ENCODE measurements at regions of chr17 and their contacts with region 1.

Region 1: DNA sequence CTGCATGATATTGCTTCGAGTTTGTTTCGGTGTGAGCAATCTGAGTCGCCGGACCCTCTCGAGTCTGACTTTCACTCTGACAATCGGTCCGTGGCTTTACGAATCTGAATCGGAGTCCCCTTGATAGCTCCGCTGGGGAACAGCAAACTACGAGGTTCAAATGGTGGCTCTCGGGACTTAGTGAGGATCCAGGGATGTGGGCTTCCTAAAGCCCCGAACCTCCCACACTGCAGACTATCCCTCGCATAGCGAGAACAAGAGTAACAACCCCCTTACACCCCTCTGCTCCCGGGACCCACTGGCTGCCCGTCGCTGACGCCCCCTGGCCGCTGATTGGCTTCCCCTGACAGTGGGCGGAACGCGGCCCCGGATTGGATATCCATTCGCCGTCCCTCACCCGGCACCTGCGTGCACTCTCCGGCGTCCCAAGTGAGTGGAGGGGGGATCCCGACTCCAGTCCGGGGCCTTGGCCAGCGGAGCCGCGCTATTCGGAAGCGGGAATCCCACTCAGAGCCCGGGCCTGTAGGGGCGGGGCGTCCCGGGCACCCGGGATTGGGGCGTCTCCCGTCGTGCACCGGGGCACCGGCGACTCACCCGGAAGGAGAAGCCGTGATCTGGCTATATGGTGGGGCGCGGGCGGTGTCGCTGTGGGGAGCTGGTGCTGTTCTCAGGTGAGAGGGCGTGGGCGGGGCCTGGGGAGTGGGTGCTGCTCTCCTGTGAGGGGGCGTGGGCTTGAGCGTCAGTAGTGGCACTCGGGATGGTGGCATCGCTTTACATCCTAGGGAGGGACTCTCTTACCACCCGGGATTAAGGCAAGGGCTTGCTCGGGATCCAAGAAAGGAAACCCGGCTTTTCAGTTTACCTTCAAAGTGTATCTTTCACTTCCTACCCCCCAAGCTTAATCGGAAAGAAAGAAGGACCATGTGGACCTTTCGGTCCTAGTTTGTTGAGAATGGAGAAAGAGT is at the start of gene SNX11:
- DNase-seq: peak; percentile 86 to 97 (median 94)
- ATAC-seq: peak; percentile 93
- H3K4me3 ChIP-seq: peak within 1 kb of the TSS; percentile 92
- H3K4me3 Mint-ChIP-seq: peak within 1 kb of the TSS; percentile 97
- H3K27ac ChIP-seq: peak within 1 kb of the TSS; percentile 84 to 93
- H3K27ac Mint-ChIP-seq: peak within 1 kb of the TSS; percentile 88
- H3K4me1 ChIP-seq: peaks cover 40% of the 10 kb centered on the region
- H3K4me1 Mint-ChIP-seq: peaks cover 63% of the 10 kb centered on the region
- H3K27me3 ChIP-seq: no peaks in the 10 kb centered on the region
- H3K27me3 Mint-ChIP-seq: no peaks in the 10 kb centered on the region
- CTCF ChIP-seq: no peak
- total RNA-seq, gene SNX11: 6.8 to 8.7 TPM

Region 2: GRCh38 chr17:47831003-47831933 is 276.2 kb before region 1 on chr17 and contains the starts of genes LRRC46 and MRPL10:
- CTCF ChIA-PET with region 1: no interaction called
- POLR2A ChIA-PET with region 1: no interaction called
- intact Hi-C with region 1: loop called in 1 of 2 experiments (anchors 10 kb)
- DNase-seq: peak; percentile 84 to 95 (median 88)
- ATAC-seq: peak; percentile 86
- H3K4me3 ChIP-seq: peak within 1 kb of the TSS; percentile 92
- H3K4me3 Mint-ChIP-seq: peak within 1 kb of the TSS; percentile 89
- H3K27ac ChIP-seq: peak within 1 kb of the TSS; percentile 78 to 90
- H3K27ac Mint-ChIP-seq: peak within 1 kb of the TSS; percentile 78
- H3K4me1 ChIP-seq: peaks cover 66% of the 10 kb centered on the region
- H3K4me1 Mint-ChIP-seq: peaks cover 58% of the 10 kb centered on the region
- H3K27me3 ChIP-seq: no peaks in the 10 kb centered on the region
- H3K27me3 Mint-ChIP-seq: no peaks in the 10 kb centered on the region
- CTCF ChIP-seq: no peak
- total RNA-seq, gene LRRC46: 0.42 to 0.85 TPM
- total RNA-seq, gene MRPL10: 49.0 to 51.4 TPM

Region 3: DNA sequence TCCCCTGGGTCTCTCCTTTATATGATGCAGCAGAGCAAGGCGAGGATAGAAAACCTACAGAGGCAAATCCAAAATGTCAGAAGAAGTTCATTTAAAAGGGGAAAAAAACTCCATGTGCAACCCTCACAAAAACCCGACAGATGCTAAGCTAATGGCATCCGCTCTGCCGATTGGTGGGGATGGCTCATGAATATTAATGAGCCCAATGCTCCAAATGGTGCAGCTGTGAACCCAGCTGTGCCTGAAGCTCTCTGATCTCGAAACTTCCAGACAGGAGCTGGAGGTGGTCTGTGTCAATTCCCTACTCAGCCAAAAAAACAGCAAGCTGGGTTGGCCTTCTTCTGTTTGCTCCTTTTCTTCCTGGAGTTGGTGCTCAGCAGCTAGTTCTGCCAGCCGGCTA is 15.7 kb after region 1 on chr17:
- CTCF ChIA-PET with region 1: no interaction called
- POLR2A ChIA-PET with region 1: interaction called, 12 read pairs
- intact Hi-C with region 1: no loop called
- DNase-seq: no peak
- ATAC-seq: no peak
- H3K4me3 ChIP-seq: no peak overlapping the region
- H3K4me3 Mint-ChIP-seq: no peak overlapping the region
- H3K27ac ChIP-seq: no peak overlapping the region
- H3K27ac Mint-ChIP-seq: no peak overlapping the region
- H3K4me1 ChIP-seq: no peaks in the 10 kb centered on the region
- H3K4me1 Mint-ChIP-seq: no peaks in the 10 kb centered on the region
- H3K27me3 ChIP-seq: no peaks in the 10 kb centered on the region
- H3K27me3 Mint-ChIP-seq: no peaks in the 10 kb centered on the region
- CTCF ChIP-seq: no peak

Measured in CD4-positive, alpha-beta T cell (primary cell).